ENCODE measurements at regions of chr5 and their contacts with region 1.

Region 1: DNA sequence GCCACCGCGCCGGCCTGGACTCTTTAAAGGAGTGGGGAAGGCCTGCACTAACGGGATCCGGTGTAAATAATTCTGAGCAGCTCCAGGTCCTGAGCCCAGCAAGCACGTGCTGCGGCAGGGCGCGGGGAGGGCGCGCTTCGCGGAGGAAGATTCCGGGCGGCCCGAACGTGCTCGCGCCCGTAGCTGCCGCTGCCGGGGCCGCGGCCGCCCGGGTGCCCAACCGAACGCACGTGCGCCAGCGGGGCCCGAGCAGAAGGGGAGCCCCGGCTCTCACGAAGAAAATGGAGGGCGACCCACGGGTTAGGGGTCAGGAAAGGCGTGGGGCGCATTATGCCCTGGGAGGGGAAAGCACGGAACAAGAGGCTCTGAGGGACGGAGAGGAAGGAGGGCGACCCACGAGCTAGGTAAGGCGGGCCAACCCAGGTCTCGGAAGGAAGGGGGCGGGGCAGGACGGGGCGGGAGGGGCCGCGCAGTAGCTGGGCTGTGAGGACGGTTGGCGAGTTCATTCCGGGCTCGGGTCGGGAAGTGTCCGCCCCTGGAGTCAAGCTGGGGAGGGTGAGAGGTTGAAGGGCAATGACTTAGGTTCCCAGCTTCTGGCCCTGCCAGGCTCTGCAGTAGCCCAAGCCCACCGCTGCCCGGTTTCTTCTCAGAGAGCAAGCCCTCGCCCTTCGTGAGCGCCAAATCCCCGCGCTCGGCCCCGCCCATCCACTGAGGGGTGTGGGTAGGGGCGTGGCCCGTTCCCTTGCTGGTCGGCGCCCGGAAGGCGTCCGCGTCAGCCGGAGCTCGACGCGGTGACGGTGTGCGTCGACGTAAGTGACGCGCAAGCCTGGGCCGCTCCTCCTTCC is at the start of gene ZNF131:
- DNase-seq: peak; percentile 98
- ATAC-seq: peak; percentile 96
- H3K4me3 ChIP-seq: peak within 1 kb of the TSS; percentile 73
- H3K4me1 ChIP-seq: peaks cover 16% of the 10 kb centered on the region
- CTCF ChIP-seq: no peak
- total RNA-seq, gene ZNF131: 26.5 to 32.6 (median 31.2) TPM

Region 2: GRCh38 chr5:43313035-43313853 is 192.3 kb after region 1 on chr5 and contains the start of gene HMGCS1:
- intact Hi-C with region 1: loop called in 1 of 2 experiments (anchors 10 kb)
- DNase-seq: peak; percentile 99
- ATAC-seq: peak; percentile 95
- H3K4me3 ChIP-seq: peak within 1 kb of the TSS; percentile 64
- H3K4me1 ChIP-seq: peaks cover 17% of the 10 kb centered on the region
- CTCF ChIP-seq: peak; percentile 18
- total RNA-seq, gene HMGCS1: 69.6 to 176 (median 151) TPM

Measured in mucosa of descending colon (tissue), 3 donors.